Activated CD4-positive, alpha-beta T cell treated with anti-CD3 and anti-CD28 coated beads for 36 hours (primary cell): ENCODE measurements at regions of chr2 and their contacts with region 1.

Region 1: GRCh38 chr2:50492477-50492851 is 539.5 kb downstream of the NRXN1 start:
- DNase-seq: peak; percentile 39
- ATAC-seq: peak; percentile 53
- H3K4me3 Mint-ChIP-seq: no peak overlapping the region
- H3K27ac Mint-ChIP-seq: no peak overlapping the region
- H3K4me1 Mint-ChIP-seq: peaks cover 12% of the 10 kb centered on the region
- H3K27me3 Mint-ChIP-seq: peaks cover 6% of the 10 kb centered on the region

Region 2: DNA sequence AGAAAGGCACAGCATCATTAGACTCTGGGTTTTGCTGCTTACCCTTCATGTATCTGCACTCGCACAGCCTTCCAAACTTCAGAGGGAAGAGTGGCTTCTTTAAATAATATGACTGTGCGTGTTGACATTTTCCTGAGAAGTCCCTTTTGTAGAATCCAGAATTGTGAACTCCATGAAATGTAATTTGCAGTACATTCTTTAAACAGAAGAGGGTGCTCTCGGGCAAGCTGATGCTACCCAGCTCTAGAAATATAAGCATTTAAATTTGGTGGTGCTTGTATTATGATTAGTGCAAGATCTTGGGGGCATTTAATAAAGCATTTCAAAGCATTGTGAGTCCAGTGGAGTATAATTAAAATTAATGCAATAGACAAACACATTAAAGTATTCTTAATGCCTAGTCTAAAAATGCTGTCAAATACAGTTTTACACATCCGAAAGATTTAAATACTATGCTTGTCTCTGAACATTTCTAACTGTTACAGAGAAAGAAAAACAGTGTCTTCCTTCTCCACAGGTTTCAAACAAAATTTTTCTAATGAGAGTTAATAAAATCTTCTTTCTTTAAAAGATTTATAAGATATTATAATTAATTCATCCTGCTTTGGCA is 1892.2 kb before region 1 on chr2:
- CTCF ChIA-PET with region 1: no interaction called
- POLR2A ChIA-PET with region 1: no interaction called
- intact Hi-C with region 1: loop called in 1 of 2 experiments (anchors 2 kb)
- DNase-seq: peak; percentile 10
- ATAC-seq: no peak
- H3K4me3 Mint-ChIP-seq: no peak overlapping the region
- H3K27ac Mint-ChIP-seq: no peak overlapping the region
- H3K4me1 Mint-ChIP-seq: no peaks in the 10 kb centered on the region
- H3K27me3 Mint-ChIP-seq: no peaks in the 10 kb centered on the region

Region 3: DNA sequence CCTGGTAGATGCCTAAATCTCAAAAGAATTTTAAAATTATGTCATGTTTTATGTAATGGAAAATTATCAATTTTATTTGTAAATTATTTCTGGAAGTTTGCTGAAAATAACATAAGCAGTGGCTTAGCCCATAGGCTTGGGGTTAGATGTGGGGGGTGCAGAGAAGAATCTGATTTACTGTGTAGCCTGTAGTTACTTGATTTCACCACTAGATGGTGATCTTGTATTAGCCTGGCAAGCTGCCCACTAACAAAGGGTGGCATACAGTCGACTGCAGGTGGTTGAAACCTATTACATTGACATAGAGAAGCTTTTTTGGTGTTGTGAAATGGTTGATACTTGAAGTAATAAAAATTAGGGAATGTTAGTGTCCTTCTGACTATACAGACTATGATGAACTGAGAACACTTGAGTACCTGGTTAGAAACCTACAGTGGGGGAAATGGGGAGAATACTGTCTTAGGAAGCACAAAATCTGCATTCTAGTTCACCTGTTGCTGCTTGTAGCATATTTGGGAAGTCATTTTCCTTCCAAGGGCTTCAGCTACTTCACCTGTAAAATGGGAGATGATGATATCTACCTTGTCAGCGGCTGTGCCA is 1545.9 kb before region 1 on chr2:
- CTCF ChIA-PET with region 1: interaction called, 16 read pairs
- POLR2A ChIA-PET with region 1: no interaction called
- intact Hi-C with region 1: loop called (anchors 1 kb)
- DNase-seq: peak; percentile 50
- ATAC-seq: peak; percentile 78
- H3K4me3 Mint-ChIP-seq: no peak overlapping the region
- H3K27ac Mint-ChIP-seq: no peak overlapping the region
- H3K4me1 Mint-ChIP-seq: no peaks in the 10 kb centered on the region
- H3K27me3 Mint-ChIP-seq: peaks cover 1% of the 10 kb centered on the region

Region 4: DNA sequence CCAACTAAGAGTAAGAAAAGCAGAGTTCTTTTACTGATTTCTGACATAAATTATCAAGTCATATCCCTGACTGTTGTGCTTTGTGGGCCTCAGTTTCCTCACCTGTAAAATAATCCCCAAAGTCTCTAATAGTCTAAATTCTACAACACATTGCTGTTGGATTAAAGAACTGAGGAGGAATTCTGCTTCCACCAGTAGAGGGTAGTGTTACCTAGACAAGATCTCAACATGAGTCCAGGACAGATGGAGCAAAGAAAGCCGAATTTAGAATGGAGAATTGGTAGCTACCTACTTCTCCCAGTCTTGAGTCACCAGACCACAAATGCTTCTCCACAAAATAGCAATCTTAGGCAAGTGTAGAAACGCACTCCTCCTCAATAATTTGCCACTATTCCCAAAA is 875.7 kb before region 1 on chr2:
- CTCF ChIA-PET with region 1: no interaction called
- POLR2A ChIA-PET with region 1: no interaction called
- intact Hi-C with region 1: loop called in 1 of 2 experiments (anchors 5 kb)
- DNase-seq: no peak
- ATAC-seq: no peak
- H3K4me3 Mint-ChIP-seq: no peak overlapping the region
- H3K27ac Mint-ChIP-seq: no peak overlapping the region
- H3K4me1 Mint-ChIP-seq: no peaks in the 10 kb centered on the region
- H3K27me3 Mint-ChIP-seq: no peaks in the 10 kb centered on the region